Activated B cell treated with CpG ODN at 0.5 μM for 24 hours (primary cell): ENCODE measurements at regions of chr2 and their contacts with region 1.

Region 1: DNA sequence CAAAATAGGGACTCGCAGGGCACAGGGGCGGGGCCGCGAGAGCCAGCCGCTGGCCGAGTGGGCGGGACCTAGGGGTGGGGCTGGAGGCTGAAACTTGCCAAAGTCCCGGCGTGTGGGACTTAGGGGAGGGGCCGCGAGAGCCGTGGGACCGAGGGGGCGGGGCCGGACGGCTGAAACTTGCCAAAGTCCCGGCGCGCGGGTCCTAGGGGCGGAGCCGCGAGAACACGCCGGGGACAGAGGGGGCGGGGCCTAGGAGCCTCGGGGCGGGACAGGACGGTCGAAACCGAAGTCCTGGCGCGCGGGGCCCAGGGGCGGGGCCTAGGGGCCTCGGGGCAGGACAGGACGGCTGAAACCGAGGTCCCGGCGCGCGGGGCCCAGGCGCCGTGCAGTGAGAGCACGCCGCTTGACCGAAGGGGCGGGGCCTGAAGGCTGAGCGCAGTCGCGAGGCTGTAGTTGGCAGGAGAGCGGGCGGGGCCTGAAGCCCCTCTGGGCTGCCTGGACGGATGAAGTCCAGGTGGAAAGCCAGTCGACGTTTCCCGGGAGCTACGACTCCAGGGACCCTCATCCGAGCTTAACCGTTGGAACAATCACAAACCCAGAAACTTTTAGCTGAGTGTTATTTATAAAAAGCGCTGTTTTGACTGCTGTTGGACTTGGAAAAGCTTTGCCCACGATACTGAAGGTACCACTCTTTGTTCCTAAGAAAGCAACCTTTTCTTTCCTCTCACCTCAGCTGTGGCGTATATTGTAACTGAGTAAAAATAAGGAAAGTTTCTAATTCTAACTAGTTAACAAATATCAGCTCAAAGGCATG is 475 bp upstream of the BARD1 start:
- DNase-seq: peak; percentile 100
- ATAC-seq: peak; percentile 85
- H3K4me3 Mint-ChIP-seq: peak overlapping the region; percentile 98
- H3K27ac Mint-ChIP-seq: peak overlapping the region; percentile 92
- H3K4me1 Mint-ChIP-seq: peaks cover 35% of the 10 kb centered on the region
- H3K27me3 Mint-ChIP-seq: no peaks in the 10 kb centered on the region
- CTCF ChIP-seq: no peak

Region 2: GRCh38 chr2:213036836-213037235 is 1773.1 kb before region 1 on chr2:
- CTCF ChIA-PET with region 1: no interaction called
- POLR2A ChIA-PET with region 1: no interaction called
- intact Hi-C with region 1: loop called (anchors 10 kb)
- DNase-seq: no peak
- ATAC-seq: no peak
- H3K4me3 Mint-ChIP-seq: no peak overlapping the region
- H3K27ac Mint-ChIP-seq: no peak overlapping the region
- H3K4me1 Mint-ChIP-seq: peaks cover 57% of the 10 kb centered on the region
- H3K27me3 Mint-ChIP-seq: no peaks in the 10 kb centered on the region
- CTCF ChIP-seq: no peak

Region 3: GRCh38 chr2:213232649-213233437 is 1577.1 kb before region 1 on chr2:
- CTCF ChIA-PET with region 1: no interaction called
- POLR2A ChIA-PET with region 1: no interaction called
- intact Hi-C with region 1: loop called (anchors 1 kb)
- DNase-seq: peak; percentile 50
- ATAC-seq: peak; percentile 95
- H3K4me3 Mint-ChIP-seq: peak overlapping the region; percentile 64
- H3K27ac Mint-ChIP-seq: peak overlapping the region; percentile 85
- H3K4me1 Mint-ChIP-seq: peaks cover 81% of the 10 kb centered on the region
- H3K27me3 Mint-ChIP-seq: no peaks in the 10 kb centered on the region
- CTCF ChIP-seq: no peak

Region 4: DNA sequence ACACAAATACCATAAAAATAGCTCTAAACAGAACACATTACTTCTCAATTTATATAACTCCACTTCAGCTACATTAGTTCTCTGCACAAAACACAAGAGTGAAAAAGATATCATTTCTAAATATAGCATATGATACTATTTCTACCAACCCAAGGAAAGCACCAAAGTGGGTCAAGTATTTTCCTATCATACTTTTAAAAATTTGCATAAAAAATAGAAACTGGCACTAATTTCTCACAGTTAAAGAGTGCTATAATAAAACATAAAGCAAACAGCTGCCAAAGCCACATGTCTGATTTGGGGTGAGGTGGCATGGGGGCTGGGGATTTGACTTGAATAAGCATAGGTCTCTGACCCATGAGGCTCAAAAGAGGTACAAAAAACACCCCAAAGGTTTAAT is 62.0 kb before region 1 on chr2:
- CTCF ChIA-PET with region 1: no interaction called
- POLR2A ChIA-PET with region 1: no interaction called
- intact Hi-C with region 1: loop called (anchors 2 kb)
- DNase-seq: no peak
- ATAC-seq: peak; percentile 40
- H3K4me3 Mint-ChIP-seq: no peak overlapping the region
- H3K27ac Mint-ChIP-seq: no peak overlapping the region
- H3K4me1 Mint-ChIP-seq: peaks cover 15% of the 10 kb centered on the region
- H3K27me3 Mint-ChIP-seq: no peaks in the 10 kb centered on the region
- CTCF ChIP-seq: no peak

Region 5: DNA sequence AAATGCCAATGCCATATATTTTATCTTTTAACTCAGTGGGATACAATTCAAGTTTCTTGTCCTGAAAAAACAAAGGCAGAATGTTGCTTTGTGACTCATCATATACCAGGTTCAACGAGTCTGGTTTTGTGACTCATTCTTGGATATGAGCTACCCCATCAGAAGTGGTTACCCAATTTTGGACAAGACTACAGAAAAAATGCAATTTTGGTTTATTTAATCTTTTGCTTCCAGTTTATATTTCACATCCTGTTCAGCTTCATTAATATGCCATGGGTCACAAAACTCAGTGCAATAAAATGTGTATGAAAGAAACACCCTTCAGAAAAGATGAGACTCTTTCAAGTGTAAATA is 601.0 kb after region 1 on chr2:
- CTCF ChIA-PET with region 1: no interaction called
- POLR2A ChIA-PET with region 1: no interaction called
- intact Hi-C with region 1: no loop called
- DNase-seq: no peak
- ATAC-seq: no peak
- H3K4me3 Mint-ChIP-seq: no peak overlapping the region
- H3K27ac Mint-ChIP-seq: no peak overlapping the region
- H3K4me1 Mint-ChIP-seq: no peaks in the 10 kb centered on the region
- H3K27me3 Mint-ChIP-seq: peaks cover 11% of the 10 kb centered on the region
- CTCF ChIP-seq: no peak

Region 6: DNA sequence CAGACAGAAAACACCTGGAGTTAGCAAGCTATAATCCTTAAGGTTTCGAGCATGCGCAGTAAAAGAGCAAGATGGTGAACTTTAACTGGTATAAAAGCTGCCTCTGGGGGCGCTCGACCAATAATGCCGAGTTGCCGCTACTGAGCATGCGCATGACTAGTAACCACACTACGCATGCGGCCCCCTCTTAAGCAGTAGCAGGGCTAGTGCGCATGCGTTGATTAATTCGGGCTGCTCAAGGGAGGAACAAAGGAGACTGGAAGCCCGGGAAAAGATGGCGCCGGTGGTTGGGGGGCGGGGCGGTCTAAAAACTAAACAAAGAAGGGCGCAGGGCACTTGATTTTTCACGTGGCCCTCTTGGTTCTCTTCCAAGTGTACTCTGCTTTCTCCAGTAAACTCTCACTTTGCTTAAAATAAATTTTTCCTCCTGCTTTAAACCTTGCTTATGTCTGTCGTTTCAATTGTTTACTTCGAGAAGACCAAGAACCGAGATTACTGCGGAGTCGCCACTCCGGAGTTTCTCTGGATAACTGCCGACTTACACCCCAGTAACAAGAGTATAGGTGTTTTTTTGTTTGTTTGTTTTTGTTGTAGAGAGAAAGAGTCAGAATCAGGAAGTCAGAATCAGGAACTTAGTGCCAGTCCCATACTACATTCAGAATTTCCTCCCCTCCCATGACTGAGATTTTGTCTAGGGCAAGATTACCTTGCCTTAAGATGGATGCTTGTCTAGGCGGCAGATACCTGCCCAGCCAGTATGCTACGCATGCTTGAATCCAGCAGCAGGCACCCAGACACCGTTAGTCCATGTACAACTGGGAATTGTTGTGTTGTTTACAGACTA is 1305.0 kb after region 1 on chr2:
- CTCF ChIA-PET with region 1: no interaction called
- POLR2A ChIA-PET with region 1: no interaction called
- intact Hi-C with region 1: loop called (anchors 1 kb)
- DNase-seq: peak; percentile 85
- ATAC-seq: peak; percentile 91
- H3K4me3 Mint-ChIP-seq: peak overlapping the region; percentile 94
- H3K27ac Mint-ChIP-seq: peak overlapping the region; percentile 97
- H3K4me1 Mint-ChIP-seq: peaks cover 78% of the 10 kb centered on the region
- H3K27me3 Mint-ChIP-seq: no peaks in the 10 kb centered on the region
- CTCF ChIP-seq: no peak